ENCODE measurements at regions of chr7 and their contacts with region 1.

Region 1: DNA sequence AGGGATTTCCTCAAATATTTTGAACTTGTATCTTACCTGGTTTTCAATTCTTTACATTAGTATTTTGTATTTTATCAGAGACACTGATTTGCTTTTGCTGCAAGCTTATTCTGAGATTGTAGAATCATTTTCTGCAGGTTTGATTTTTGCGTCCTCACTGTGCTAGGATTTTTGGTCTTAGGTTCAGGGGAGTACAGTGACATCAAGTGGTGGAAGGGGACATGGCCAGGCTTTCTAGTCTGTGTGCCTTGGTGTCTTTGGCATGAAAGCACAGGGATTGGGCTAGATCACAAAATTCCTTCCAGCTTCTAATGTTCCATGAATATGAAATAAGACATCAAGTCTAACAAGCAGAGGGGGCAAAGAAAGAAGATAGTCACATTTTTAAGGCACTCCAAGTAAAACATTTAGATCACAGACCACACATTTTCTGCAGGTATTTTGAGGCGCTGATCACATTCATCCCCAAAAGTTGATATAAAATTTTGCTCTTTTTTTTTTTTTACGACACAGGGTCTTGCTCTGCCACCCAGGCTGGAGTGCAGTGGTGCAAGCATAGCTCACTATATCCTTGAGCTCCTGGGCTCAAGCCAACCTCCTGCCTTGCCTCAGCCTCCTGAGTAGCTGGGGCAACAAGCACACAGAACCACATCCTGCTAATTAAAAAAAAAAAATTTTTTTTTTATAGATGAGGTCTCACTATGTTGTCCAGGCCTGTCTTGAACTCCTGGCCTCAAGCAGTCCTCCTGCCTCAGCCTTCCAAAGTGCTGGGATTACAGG is 124.4 kb downstream of the PON1 start:
- DNase-seq: peak; percentile 41
- H3K4me3 ChIP-seq: no peak overlapping the region
- H3K27ac ChIP-seq: no peak overlapping the region
- H3K4me1 ChIP-seq: no peaks in the 10 kb centered on the region
- H3K27me3 ChIP-seq: no peaks in the 10 kb centered on the region
- CTCF ChIP-seq: peak; percentile 49 to 65
- POLR2A ChIP-seq: no peak

Region 2: DNA sequence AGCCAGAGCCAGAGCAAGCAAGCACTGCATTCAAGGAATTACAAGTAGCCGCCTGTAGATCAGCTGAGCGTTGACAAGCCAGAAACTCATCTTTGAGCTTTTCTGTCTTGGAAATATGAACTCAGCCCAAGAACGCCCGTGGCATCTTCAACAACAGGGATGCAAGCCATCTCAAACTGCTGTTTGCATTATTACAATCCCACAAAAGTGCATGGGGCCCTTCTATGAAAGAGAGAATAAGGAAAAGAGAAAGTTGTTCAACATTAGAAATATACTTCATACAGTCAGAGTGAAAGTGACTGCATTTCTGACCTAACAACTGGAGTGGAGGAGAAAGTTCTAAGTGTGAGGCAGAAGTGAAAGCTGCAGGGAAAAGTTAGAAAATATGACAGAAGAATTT is 550.5 kb before region 1 on chr7:
- CTCF ChIA-PET with region 1: no interaction called
- POLR2A ChIA-PET with region 1: no interaction called
- dilution Hi-C with region 1: no loop called
- intact Hi-C with region 1: loop called (anchors 10 kb)
- DNase-seq: no peak
- H3K4me3 ChIP-seq: no peak overlapping the region
- H3K27ac ChIP-seq: no peak overlapping the region
- H3K4me1 ChIP-seq: peaks cover 2% of the 10 kb centered on the region
- H3K27me3 ChIP-seq: no peaks in the 10 kb centered on the region
- CTCF ChIP-seq: no peak
- POLR2A ChIP-seq: no peak

Region 3: DNA sequence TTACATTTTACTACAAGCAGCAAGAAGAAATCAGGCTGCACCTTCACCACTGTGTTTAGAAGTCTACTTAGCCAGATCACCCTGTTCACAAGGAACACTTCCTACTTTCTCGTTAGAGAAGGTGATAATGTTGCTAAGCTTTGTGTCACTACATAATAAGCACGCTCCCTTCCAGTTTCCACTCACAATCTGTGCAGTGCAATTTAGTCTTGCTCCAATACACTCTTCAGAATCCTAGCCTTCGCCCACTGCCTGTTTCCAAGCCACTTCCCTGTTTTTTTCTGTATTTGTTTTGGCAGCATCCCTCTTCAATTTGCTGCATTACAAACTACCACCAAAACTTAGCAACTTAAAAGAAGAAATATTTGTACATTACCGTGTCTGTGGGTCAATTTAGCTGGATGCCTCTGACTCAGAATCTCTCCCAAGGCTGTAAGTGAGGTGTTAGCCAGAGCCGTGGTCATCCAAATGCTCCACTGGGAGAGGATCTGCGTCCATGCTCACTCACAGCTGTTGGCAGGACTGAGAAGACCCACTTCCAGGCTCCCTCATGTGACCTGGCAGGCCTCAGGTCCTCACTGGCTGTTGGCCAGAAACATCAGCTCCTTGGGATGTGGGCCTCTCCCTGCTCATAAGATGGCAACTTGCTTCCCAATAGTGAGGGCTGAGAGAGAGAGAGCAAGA is 14.0 kb after region 1 on chr7:
- CTCF ChIA-PET with region 1: no interaction called
- POLR2A ChIA-PET with region 1: no interaction called
- dilution Hi-C with region 1: no loop called
- intact Hi-C with region 1: no loop called
- DNase-seq: no peak
- H3K4me3 ChIP-seq: no peak overlapping the region
- H3K27ac ChIP-seq: no peak overlapping the region
- H3K4me1 ChIP-seq: no peaks in the 10 kb centered on the region
- H3K27me3 ChIP-seq: no peaks in the 10 kb centered on the region
- CTCF ChIP-seq: no peak
- POLR2A ChIP-seq: no peak